HepG2 (cell line): ENCODE measurements at regions of chr22 and their contacts with region 1.

Region 1: DNA sequence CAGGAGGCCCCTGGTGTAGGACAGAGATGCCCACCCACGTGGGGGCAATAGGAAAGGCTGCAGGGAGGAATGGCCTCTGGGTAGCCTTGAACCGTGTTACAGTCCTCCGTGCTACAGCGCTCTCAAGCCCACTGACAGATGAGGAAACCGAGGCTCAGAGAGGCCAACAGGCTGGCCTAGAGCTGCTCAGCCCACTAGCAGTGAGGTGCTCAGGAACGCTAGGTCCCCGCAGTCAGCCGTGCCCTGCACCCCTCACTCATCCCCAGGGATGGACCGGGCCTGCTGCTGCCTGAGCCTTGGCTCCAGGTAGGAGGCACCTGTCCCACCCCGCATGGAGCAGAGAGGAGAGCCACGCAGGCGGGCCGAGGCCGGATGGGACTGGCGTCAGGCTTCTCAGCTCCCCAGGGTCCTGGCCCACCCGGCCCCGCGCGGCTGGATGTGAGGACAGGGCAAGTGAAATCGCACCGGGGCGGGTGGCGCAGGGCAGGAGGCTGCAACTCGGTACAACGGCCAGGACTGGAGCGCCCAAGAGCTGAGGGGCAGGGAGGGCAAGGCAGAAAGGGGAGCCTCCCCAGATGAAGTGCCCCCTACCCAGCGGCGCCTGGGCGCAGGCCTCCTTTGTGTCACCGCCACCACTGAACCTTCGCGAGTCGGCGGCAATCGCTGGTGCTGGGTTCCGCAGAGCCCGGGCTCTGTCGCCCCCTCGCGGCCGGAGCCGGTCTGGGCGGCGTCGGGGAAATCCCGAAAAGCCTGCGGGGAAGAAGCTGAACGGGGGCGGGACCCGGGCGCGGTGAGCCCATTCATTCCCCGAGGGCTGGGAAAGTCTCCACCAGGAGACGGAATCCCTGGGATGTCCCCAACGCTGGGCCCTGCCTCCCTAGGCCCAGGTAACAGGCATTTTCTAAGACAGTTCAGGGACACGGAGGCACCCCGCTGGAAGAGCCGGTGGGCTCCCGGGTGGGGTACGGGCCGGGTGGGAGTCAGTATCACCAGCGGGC is 8.4 kb upstream of the SLC2A11 start:
- DNase-seq: peak; percentile 58
- ATAC-seq: peak; percentile 82
- H3K4me3 ChIP-seq: peak overlapping the region; percentile 27 to 69 (median 49); a peak in 3 of 6 replicates
- H3K27ac ChIP-seq: no peak overlapping the region
- H3K4me1 ChIP-seq: peaks cover 65% of the 10 kb centered on the region
- H3K27me3 ChIP-seq: peaks cover 2 to 11% of the 10 kb centered on the region in 2 experiments; a peak in 1 of 5 replicates
- CTCF ChIP-seq: peak; percentile 99
- EP300 ChIP-seq: no peak
- POLR2A ChIP-seq: no peak
- RAD21 ChIP-seq: peak; percentile 99

Region 2: DNA sequence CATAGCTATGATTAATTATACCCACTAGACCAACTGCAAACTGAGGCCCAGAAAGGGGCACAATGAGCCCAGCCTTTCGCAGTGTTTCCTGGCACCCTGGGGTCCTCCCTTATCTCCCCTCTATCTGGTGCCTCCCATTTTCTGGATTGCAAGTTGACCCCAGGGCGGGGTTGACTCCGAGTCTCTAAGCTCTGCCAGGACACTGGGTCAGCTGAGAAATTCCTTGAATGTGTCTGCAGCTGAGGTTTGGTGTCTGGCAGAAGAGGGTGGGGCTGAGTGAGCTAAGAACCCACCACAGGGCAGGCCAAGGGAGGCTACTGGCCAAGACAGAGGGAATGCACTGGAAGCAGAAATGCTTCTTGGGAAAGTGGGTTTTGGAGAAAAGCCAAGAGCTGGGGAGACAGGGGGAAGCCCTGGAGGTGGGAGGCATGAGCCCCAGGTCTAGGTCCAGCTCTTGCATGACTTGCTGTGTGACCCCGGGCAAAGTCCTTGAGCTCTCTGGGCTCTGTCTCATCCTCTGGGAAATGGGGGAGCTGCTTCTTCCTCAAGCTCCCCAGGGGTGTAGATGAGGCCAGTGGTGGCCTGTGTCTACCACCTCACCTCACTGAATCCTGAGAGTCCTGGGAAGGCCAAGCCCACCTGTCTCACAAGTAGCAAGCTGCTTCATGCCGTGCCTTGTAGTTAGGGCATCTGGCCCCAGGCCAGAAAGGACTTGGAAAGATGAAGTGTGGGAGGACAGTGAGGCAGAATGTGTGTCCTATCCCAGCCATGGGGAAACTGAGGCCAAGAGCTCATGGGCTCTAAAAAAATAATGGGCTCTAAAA is 74.4 kb before region 1 on chr22:
- CTCF ChIA-PET with region 1: no interaction called
- POLR2A ChIA-PET with region 1: interaction called, 18 read pairs
- in situ Hi-C with region 1: loop called (anchors 5 kb)
- intact Hi-C with region 1: no loop called
- DNase-seq: no peak
- ATAC-seq: no peak
- H3K4me3 ChIP-seq: peak overlapping the region in 2 of 3 experiments; percentile 35 to 90; a peak in 5 of 6 replicates
- H3K27ac ChIP-seq: peak overlapping the region; percentile 75
- H3K4me1 ChIP-seq: peaks cover 74% of the 10 kb centered on the region
- H3K27me3 ChIP-seq: no peaks in the 10 kb centered on the region; a peak in 1 of 5 replicates
- CTCF ChIP-seq: no peak
- EP300 ChIP-seq: no peak
- POLR2A ChIP-seq: no peak
- RAD21 ChIP-seq: no peak

Region 3: GRCh38 chr22:23781511-23782315 is 67.6 kb before region 1 on chr22:
- CTCF ChIA-PET with region 1: no interaction called
- POLR2A ChIA-PET with region 1: interaction called, 3 read pairs
- in situ Hi-C with region 1: loop called (anchors 5 kb)
- intact Hi-C with region 1: no loop called
- DNase-seq: no peak
- ATAC-seq: peak; percentile 7; the same call in 1 of the 3 replicates
- H3K4me3 ChIP-seq: no peak overlapping the region
- H3K27ac ChIP-seq: no peak overlapping the region
- H3K4me1 ChIP-seq: peaks cover 69% of the 10 kb centered on the region
- H3K27me3 ChIP-seq: no peaks in the 10 kb centered on the region
- CTCF ChIP-seq: no peak
- EP300 ChIP-seq: no peak
- POLR2A ChIP-seq: no peak
- RAD21 ChIP-seq: no peak

Region 4: GRCh38 chr22:23800297-23801237 is 48.7 kb before region 1 on chr22:
- CTCF ChIA-PET with region 1: no interaction called
- POLR2A ChIA-PET with region 1: no interaction called
- in situ Hi-C with region 1: no loop called
- intact Hi-C with region 1: no loop called
- DNase-seq: no peak
- ATAC-seq: no peak
- H3K4me3 ChIP-seq: no peak overlapping the region
- H3K27ac ChIP-seq: no peak overlapping the region
- H3K4me1 ChIP-seq: peaks cover 11% of the 10 kb centered on the region
- H3K27me3 ChIP-seq: no peaks in the 10 kb centered on the region
- CTCF ChIP-seq: no peak
- EP300 ChIP-seq: no peak
- POLR2A ChIP-seq: no peak
- RAD21 ChIP-seq: no peak

Region 5: GRCh38 chr22:23878219-23878618 is 28.9 kb after region 1 on chr22:
- CTCF ChIA-PET with region 1: no interaction called
- POLR2A ChIA-PET with region 1: no interaction called
- in situ Hi-C with region 1: no loop called
- intact Hi-C with region 1: no loop called
- DNase-seq: no peak
- ATAC-seq: no peak
- H3K4me3 ChIP-seq: no peak overlapping the region
- H3K27ac ChIP-seq: no peak overlapping the region
- H3K4me1 ChIP-seq: peaks cover 7% of the 10 kb centered on the region; the same call in 1 of the 2 replicates
- H3K27me3 ChIP-seq: no peaks in the 10 kb centered on the region
- CTCF ChIP-seq: no peak
- EP300 ChIP-seq: no peak
- POLR2A ChIP-seq: no peak
- RAD21 ChIP-seq: no peak